Activated CD4-positive, alpha-beta memory T cell treated with anti-CD3 and anti-CD28 coated beads for 36 hours (primary cell): ENCODE measurements at regions of chr7 and their contacts with region 1.

Region 1: GRCh38 chr7:44477063-44477830 is 13.2 kb downstream of the NUDCD3 start:
- DNase-seq: peak; percentile 72
- H3K4me3 Mint-ChIP-seq: no peak overlapping the region
- H3K27ac Mint-ChIP-seq: no peak overlapping the region
- H3K4me1 Mint-ChIP-seq: peaks cover 33% of the 10 kb centered on the region
- H3K27me3 Mint-ChIP-seq: no peaks in the 10 kb centered on the region

Region 2: GRCh38 chr7:44240983-44241510 is 236.2 kb before region 1 on chr7:
- CTCF ChIA-PET with region 1: interaction called, 8 read pairs
- POLR2A ChIA-PET with region 1: no interaction called
- intact Hi-C with region 1: loop called (anchors 1 kb)
- DNase-seq: peak; percentile 77
- H3K4me3 Mint-ChIP-seq: no peak overlapping the region
- H3K27ac Mint-ChIP-seq: no peak overlapping the region
- H3K4me1 Mint-ChIP-seq: no peaks in the 10 kb centered on the region
- H3K27me3 Mint-ChIP-seq: no peaks in the 10 kb centered on the region

Region 3: DNA sequence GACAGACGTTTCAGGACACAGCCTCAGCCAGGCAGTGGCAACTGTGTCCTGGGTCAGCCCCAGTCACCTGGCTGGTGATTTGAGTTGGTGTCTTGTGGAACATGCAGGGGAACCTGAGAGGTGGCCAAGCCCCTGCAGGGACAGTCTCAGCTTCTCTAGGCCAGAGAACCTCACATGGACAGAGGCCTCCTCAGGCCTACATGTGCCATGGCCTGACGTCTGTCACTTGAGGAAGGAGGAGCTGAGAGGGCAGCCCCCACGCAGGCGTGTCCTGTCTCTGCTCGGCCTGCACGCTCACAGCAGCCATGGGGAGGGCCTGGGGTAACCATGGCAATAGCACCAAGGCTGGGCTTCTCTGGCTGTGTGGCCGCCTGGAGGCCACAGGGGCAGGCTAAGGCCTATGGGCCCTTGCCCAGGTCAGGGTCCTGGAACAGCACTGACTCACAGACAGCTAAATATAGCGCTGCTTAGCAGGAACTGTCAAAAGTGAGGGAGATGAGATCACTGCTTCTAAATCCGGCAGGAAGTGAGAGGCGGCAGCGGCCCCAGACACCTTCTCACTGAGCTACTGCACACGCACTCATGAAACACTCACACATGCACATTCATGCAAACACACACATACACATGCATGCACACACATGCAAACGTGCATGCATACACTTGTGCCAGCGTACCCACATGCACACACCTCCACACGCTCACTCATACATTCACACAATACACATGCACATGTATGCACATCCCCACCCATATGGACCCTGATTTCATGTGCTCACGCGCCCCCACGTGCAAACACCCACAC is 219.4 kb before region 1 on chr7:
- CTCF ChIA-PET with region 1: no interaction called
- POLR2A ChIA-PET with region 1: no interaction called
- intact Hi-C with region 1: loop called (anchors 5 kb)
- DNase-seq: peak; percentile 90
- H3K4me3 Mint-ChIP-seq: peak overlapping the region; percentile 52
- H3K27ac Mint-ChIP-seq: peak overlapping the region; percentile 90
- H3K4me1 Mint-ChIP-seq: peaks cover 38% of the 10 kb centered on the region
- H3K27me3 Mint-ChIP-seq: no peaks in the 10 kb centered on the region

Region 4: DNA sequence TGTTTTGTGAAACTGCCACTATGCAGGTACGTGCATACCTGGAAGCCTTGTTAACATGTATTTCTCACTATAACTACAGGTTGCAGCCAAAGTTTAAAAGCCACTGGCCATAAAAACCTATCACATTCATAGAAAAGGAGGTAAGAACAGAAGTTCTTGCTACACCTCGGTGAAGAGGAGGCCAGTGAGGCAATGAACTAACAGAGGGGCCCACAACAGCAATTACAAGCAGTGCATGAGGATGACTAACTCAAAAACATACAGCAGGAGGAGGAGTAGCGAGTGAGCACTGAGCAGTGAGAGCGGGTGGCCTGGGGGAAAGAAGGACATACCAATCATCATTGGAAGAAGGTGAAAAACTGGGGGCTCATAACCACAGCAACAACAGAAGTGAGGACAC is 38.4 kb before region 1 on chr7:
- CTCF ChIA-PET with region 1: no interaction called
- POLR2A ChIA-PET with region 1: no interaction called
- intact Hi-C with region 1: loop called (anchors 5 kb)
- DNase-seq: no peak
- H3K4me3 Mint-ChIP-seq: no peak overlapping the region
- H3K27ac Mint-ChIP-seq: no peak overlapping the region
- H3K4me1 Mint-ChIP-seq: peaks cover 63% of the 10 kb centered on the region
- H3K27me3 Mint-ChIP-seq: no peaks in the 10 kb centered on the region

Region 5: GRCh38 chr7:44460325-44460724 is 16.9 kb before region 1 on chr7:
- CTCF ChIA-PET with region 1: interaction called, 6 read pairs
- POLR2A ChIA-PET with region 1: interaction called, 5 read pairs
- intact Hi-C with region 1: loop called (anchors 1 kb)
- DNase-seq: peak; percentile 74
- H3K4me3 Mint-ChIP-seq: peak overlapping the region; percentile 34
- H3K27ac Mint-ChIP-seq: peak overlapping the region; percentile 64
- H3K4me1 Mint-ChIP-seq: peaks cover 70% of the 10 kb centered on the region
- H3K27me3 Mint-ChIP-seq: no peaks in the 10 kb centered on the region